ENCODE measurements at regions of chr1 and their contacts with region 1.

Region 1: GRCh38 chr1:119147661-119148090 is 7.2 kb upstream of the WARS2 start:
- DNase-seq: no peak
- ATAC-seq: no peak
- H3K4me3 ChIP-seq: no peak overlapping the region
- H3K27ac ChIP-seq: no peak overlapping the region
- H3K4me1 ChIP-seq: no peaks in the 10 kb centered on the region
- H3K27me3 ChIP-seq: no peaks in the 10 kb centered on the region
- CTCF ChIP-seq: no peak

Region 2: DNA sequence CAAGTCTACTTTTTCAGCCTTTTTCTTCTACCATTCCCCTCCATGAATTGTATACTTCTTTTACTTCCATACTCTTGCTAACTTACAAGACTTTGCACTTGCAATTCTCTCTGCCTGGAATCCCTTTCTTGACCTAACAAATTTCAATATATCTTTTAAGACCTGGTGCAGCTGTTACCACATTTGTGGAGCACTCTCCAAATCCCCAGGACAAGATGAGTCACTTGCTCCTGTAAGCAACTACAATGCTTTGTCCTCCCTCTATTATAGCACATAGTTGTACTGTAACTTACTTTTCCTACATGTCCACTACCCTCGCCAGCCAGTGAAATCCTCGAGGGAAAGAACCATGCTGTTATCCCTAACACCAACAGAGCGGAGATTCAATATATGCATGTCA is 50.3 kb before region 1 on chr1:
- CTCF ChIA-PET with region 1: no interaction called
- POLR2A ChIA-PET with region 1: interaction called, 13 read pairs
- in situ Hi-C with region 1: no loop called
- intact Hi-C with region 1: no loop called
- DNase-seq: no peak
- ATAC-seq: no peak
- H3K4me3 ChIP-seq: no peak overlapping the region
- H3K27ac ChIP-seq: no peak overlapping the region
- H3K4me1 ChIP-seq: no peaks in the 10 kb centered on the region
- H3K27me3 ChIP-seq: no peaks in the 10 kb centered on the region
- CTCF ChIP-seq: no peak

Region 3: GRCh38 chr1:119482531-119483425 is 335.1 kb after region 1 on chr1:
- CTCF ChIA-PET with region 1: no interaction called
- POLR2A ChIA-PET with region 1: no interaction called
- in situ Hi-C with region 1: no loop called
- intact Hi-C with region 1: no loop called
- DNase-seq: no peak
- ATAC-seq: no peak
- H3K4me3 ChIP-seq: no peak overlapping the region
- H3K27ac ChIP-seq: no peak overlapping the region
- H3K4me1 ChIP-seq: no peaks in the 10 kb centered on the region
- H3K27me3 ChIP-seq: no peaks in the 10 kb centered on the region; the same call in 1 of the 2 replicates
- CTCF ChIP-seq: no peak